ENCODE measurements at regions of chr19 and their contacts with region 1.

Region 1: DNA sequence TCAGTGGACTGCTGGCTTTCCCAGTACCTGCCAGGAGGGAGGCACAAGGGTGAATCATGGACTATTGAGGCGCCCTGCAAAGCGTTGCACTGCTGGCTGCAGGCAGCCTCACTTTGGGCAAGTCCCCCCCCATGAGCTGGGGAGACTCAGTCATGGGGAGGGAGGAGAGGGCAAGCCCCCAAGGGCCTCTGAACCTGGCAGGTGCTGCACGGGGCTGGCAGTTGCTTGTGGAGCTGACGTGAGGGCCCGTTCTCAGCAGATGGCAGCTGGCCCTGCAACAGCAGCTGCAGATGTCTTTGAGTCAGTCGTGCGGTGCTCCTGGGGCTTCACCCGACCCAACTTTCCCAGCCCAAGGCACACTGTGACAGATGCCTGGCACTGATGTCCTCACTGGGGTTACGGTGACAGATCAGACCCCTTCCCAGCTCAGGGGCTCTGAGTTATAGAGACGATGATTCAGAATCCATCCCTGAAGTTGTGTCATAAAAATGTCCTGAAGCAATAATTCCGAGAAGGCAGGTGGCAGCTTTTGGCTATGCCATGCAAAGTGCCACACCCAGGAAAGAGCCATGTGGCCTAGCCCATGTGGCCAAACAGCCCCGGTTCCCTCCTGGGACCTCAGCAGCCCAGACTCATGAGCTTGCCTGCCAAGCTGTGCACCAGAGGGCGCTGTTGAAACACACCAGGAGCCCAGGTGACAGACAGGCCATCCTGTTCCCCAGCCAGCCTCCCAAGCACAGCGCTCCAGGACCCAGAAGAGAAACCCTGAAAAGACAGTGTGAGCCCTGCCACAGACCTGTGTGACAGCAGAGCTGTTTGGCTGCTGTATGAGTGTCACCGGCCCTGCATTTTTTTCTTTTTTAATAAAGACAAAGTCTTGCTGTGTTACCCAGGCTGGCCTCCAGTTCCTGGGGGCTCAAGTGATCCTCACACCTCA is 53.6 kb upstream of the LDLR start:
- DNase-seq: peak; percentile 19
- H3K4me3 ChIP-seq: no peak overlapping the region
- CTCF ChIP-seq: peak; percentile 94

Region 2: DNA sequence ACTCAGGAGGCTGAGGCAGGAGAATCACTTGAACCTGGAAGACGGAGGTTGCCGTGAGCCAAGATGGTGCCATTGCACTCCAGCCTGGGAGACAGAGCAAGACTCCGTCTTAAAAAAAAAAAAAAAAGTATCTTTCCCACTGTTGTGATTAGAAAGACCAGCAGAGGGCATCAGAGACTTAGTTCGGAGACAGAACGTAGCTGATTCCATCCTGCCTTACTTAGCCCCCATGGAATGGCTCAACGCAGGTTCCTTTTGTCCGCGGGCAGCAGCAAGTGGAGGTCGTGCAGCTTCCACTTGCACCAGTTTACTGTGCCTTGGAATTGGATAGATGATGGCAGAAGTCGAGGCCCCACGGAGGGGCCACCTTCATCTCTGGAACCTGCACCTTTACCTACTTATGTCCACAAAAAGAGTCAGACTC is 99.0 kb before region 1 on chr19:
- CTCF ChIA-PET with region 1: interaction called, 31 read pairs
- POLR2A ChIA-PET with region 1: no interaction called
- DNase-seq: peak; percentile 19
- H3K4me3 ChIP-seq: no peak overlapping the region
- CTCF ChIP-seq: peak; percentile 62

Region 3: DNA sequence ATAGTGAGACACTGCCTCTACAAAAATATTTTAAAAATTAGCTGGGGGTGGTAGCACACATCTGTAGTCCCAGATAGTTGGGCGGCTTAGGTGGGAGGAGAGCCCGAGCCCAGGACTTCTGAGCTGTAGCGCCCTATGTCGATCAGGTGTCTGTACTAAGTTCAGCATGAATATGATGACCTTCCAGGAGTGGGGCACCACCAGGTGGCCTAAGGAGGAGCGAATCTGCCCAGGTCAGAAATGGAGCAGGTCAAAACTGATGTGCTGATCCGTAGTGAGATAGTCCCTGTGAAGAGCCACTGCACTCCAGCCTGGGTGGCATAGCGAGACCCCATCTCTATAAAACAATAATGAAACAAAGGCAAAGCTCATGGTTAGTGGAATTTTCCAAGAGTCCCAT is 24.0 kb before region 1 on chr19:
- CTCF ChIA-PET with region 1: interaction called, 23 read pairs
- POLR2A ChIA-PET with region 1: no interaction called
- DNase-seq: no peak
- H3K4me3 ChIP-seq: no peak overlapping the region
- CTCF ChIP-seq: no peak

Region 4: DNA sequence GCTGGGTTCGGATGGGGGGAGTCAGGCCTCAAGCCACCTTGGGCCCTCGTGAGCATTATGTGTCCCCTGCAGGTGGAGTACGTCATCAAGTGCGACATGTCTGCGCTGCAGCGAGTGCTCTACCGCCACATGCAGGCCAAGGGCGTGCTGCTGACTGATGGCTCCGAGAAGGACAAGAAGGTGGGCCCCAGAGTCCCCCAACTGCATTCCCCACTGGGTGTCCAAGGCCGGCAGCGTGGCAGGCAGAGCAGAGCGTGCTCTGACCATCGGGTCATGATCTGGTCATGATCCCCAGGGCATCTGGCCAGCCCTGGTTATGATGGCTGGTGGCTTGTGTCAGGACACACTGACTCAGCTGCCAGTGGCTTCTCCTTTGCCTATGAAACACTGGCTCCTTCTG is 11.4 kb before region 1 on chr19:
- CTCF ChIA-PET with region 1: interaction called, 56 read pairs
- POLR2A ChIA-PET with region 1: no interaction called
- DNase-seq: no peak
- H3K4me3 ChIP-seq: no peak overlapping the region
- CTCF ChIP-seq: no peak

Region 5: DNA sequence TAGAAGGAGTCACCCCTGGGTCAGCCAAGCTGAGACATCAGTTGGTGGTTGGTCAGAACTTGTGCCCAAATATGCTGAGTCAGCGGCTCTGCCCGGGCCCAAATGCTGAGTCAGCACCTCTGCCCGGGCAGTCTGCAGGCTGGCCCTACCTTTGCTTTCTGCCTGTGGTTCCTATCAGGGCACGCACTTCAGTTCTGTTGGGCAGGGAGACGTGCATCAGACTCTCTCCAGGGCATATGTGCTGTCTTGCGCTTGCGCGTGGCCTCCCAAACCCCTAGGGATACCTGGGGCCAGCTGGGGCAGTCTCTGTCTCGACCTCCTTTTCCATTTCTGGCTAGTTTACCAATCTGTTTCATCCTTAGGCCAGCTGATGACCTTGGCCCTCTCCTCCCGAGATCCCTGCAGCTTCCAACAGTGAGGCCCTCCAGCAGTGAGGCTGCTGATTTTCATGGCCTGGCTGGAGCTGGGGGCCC is 29.2 kb after region 1 on chr19:
- CTCF ChIA-PET with region 1: interaction called, 14 read pairs
- POLR2A ChIA-PET with region 1: no interaction called
- DNase-seq: no peak
- H3K4me3 ChIP-seq: no peak overlapping the region
- CTCF ChIP-seq: no peak

Region 6: GRCh38 chr19:11096210-11096841 is 60.6 kb after region 1 on chr19:
- CTCF ChIA-PET with region 1: interaction called, 29 read pairs
- POLR2A ChIA-PET with region 1: no interaction called
- DNase-seq: no peak
- H3K4me3 ChIP-seq: no peak overlapping the region
- CTCF ChIP-seq: no peak

Region 7: GRCh38 chr19:11208561-11209471 is 173.1 kb after region 1 on chr19:
- CTCF ChIA-PET with region 1: interaction called, 13 read pairs
- POLR2A ChIA-PET with region 1: no interaction called
- DNase-seq: no peak
- H3K4me3 ChIP-seq: no peak overlapping the region
- CTCF ChIP-seq: no peak

Measured in AG04449 (cell line).